ENCODE measurements at regions of chr9 and their contacts with region 1.

Region 1: DNA sequence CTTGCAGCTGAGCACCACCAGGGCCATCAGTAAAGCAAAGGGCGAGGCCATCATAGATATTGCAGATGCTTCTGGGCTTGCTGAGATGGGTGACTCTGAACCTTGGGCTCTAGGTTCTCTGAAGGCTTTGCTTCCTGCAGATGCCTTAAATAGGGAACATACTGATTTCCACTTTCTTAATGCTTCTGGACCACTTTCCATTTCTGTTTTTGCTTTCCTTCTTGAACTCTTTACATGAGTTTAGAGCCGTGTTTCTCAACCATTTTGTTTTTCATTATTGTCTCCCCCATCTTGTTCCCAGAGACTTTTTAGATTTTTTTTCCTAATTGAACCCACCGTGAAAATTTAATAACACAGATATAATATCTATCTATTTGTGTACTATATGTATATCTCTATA is at the start of gene IFNA13:
- DNase-seq: no peak
- H3K4me3 ChIP-seq: no peak within 1 kb of the TSS
- H3K27ac ChIP-seq: no peak within 1 kb of the TSS
- H3K4me1 ChIP-seq: no peaks in the 10 kb centered on the region
- H3K27me3 ChIP-seq: no peaks in the 10 kb centered on the region
- CTCF ChIP-seq: no peak
- POLR2A ChIP-seq: no peak
- total RNA-seq, gene IFNA13: not detected

Region 2: DNA sequence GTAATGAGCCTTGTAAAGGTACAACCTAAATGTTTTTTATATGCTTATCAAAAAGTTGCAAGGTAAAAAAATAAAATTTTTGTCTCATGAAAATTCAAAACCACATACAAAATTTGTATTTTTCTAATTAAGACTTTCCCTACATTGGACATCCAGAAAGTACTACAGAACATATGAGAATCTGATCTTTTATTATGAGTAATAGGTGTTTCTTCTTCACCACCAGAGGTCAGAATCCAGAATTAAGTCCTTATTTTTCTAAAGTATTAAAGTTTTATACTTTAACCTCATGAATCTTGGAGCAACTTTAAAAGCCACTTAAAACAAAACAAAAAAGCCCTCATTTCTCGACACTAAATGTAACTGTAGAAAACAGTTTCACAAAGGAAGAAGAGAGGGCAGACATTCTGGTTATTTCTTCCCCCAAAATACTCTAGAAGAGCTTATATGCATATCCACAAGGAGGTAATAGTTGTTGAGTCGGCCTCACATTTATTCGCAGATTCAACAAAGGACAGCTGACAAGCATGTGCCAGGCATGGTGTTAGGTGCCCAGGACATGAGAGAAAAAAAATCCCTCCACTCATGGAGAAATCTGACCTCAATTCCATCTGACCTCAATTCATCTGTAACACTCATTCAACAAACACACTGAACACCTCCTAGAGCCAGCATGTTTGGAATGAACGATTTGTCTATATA is 814.9 kb before region 1 on chr9:
- intact Hi-C with region 1: no loop called
- DNase-seq: no peak
- H3K4me3 ChIP-seq: no peak overlapping the region
- H3K27ac ChIP-seq: no peak overlapping the region
- H3K4me1 ChIP-seq: no peaks in the 10 kb centered on the region
- H3K27me3 ChIP-seq: no peaks in the 10 kb centered on the region
- CTCF ChIP-seq: peak in 2 of 3 donors; percentile 15 to 30
- POLR2A ChIP-seq: no peak

Region 3: DNA sequence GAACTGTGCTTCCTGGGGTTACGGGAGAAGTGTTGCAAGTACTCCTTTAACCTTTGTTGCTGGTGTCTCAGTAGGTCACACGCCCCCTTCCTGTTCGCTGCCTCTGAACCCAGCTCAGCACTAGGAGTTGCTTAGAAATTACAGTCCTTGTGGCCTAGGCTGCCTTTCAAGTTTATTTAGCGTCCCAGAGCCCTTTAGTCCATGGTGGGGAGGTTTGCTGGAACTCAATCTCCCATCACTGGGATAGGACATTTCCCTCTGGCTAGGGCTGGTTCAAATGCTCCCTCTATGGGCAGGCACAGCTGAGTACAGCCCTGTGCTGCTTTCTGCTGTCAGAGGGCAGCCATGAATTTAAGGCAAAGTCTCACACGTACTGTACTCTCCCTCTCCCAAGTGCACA is 45.7 kb after region 1 on chr9:
- intact Hi-C with region 1: loop called (anchors 2 kb)
- DNase-seq: no peak
- H3K4me3 ChIP-seq: no peak overlapping the region
- H3K27ac ChIP-seq: no peak overlapping the region
- H3K4me1 ChIP-seq: no peaks in the 10 kb centered on the region
- H3K27me3 ChIP-seq: no peaks in the 10 kb centered on the region
- CTCF ChIP-seq: no peak
- POLR2A ChIP-seq: no peak

Measured in breast epithelium (tissue), 4 donors.